ENCODE measurements at regions of chr11 and their contacts with region 1.

Region 1: DNA sequence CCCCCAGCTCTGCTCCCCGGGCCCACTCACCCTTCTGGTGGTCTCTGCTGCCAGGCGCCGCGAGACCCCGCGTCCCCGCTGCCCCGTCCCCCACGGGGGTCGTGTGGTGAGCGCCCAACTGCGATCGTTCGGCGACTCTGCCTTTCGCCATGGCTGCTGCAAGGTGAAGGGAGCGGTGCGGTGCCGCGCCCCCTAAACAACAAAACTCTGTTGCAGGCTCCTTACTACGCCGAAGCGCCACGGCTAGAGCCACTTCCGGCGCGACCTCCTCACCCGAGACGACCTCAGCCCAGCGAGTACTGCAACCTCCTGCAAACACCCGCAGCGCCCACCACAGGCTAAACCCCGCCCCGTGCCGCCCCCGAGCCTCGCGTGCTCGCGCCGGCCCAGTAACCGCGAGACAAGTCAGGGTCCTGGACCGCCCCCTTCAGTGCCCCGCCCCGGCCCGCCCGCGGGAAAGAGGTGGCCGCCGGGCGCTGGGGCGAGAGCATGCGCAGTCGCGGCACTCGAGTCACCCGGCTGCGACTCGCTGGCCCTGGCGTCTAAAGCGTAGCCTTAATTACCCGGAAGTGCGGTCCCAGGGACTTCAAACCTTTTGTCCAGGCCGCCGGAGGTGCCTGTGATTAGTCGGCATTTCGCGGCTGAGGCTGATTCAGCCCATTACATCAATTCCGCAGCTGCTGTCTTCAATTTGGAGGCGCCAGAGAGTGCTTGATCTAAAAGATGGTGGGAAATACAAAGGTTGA is at the start of gene TMEM41B:
- DNase-seq: peak; percentile 89
- ATAC-seq: peak; percentile 98
- H3K4me3 ChIP-seq: peak within 1 kb of the TSS; percentile 94
- H3K27ac ChIP-seq: peak within 1 kb of the TSS; percentile 83
- H3K4me1 ChIP-seq: peaks cover 3% of the 10 kb centered on the region; the same call in 1 of the 2 replicates
- H3K27me3 ChIP-seq: no peaks in the 10 kb centered on the region
- CTCF ChIP-seq: no peak
- EP300 ChIP-seq: peak in 1 of 2 experiments; percentile 42; a peak in 1 of 4 replicates
- POLR2A ChIP-seq: peak; percentile 96
- RAD21 ChIP-seq: 0 out of 2 replicates have a peak, but pooled peaks have one; percentile 2
- polyA plus RNA-seq, gene TMEM41B: 8.0 to 11.0 TPM

Region 2: DNA sequence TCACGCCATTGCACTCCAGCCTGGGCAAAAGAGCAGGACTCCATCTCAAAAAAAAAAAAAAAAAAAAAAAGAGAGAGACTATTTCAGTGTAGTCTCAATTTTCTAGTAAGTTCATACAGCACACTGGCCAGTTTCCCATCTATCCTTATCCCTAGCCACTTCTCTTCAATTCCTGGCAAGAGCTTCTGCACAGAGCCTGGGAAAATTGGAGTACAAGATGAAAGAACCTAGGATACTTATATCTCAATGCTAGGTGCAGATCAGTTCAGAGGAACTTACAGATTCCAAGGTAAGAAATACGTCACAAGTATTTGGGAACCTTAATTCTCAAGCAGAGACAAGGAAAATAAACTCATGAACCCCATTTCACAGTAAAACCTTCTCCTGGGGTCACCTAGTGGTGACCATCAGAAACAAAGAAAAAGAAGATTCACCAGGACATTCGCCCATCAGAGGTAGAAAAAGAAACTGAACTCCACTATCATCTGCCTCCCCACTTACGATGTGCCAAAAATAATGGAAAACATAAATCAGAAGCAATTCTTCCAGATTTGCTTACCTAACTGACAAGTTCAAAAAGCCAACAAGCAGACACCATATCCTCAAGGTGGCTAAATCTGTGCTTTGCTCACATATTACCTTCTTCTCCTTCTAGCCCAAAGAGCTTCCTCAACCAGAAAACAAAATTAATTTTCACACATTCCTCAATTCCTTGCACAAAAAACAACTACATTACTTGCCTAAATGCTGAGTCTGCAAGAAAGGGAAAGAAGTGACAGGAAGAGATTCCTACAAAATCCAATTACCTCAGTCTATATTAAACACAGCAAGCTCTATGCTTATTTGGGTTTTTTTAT is 54.3 kb before region 1 on chr11:
- CTCF ChIA-PET with region 1: interaction called, 3 read pairs
- POLR2A ChIA-PET with region 1: interaction called, 5 read pairs
- RAD21 ChIA-PET with region 1: interaction called, 7 read pairs
- SMC1A ChIA-PET with region 1: interaction called, 17 read pairs
- in situ Hi-C with region 1: no loop called
- intact Hi-C with region 1: loop called (anchors 2 kb)
- DNase-seq: no peak
- ATAC-seq: 0 out of 3 replicates have a peak, but pooled peaks have one; percentile 8
- H3K4me3 ChIP-seq: peak overlapping the region; percentile 50
- H3K27ac ChIP-seq: no peak overlapping the region
- H3K4me1 ChIP-seq: peaks cover 4% of the 10 kb centered on the region; the same call in 1 of the 2 replicates
- H3K27me3 ChIP-seq: no peaks in the 10 kb centered on the region
- CTCF ChIP-seq: peak; percentile 23 to 30 (median 24); a peak in 4 of 6 replicates
- EP300 ChIP-seq: no peak
- POLR2A ChIP-seq: no peak
- RAD21 ChIP-seq: peak; percentile 59

Region 3: GRCh38 chr11:9280655-9281301 is 33.7 kb before region 1 on chr11:
- CTCF ChIA-PET with region 1: interaction called, 3 read pairs
- POLR2A ChIA-PET with region 1: interaction called, 8 read pairs
- RAD21 ChIA-PET with region 1: interaction called, 9 read pairs
- SMC1A ChIA-PET with region 1: interaction called, 25 read pairs
- in situ Hi-C with region 1: no loop called
- intact Hi-C with region 1: no loop called
- DNase-seq: peak; percentile 58
- ATAC-seq: peak; percentile 97
- H3K4me3 ChIP-seq: no peak overlapping the region
- H3K27ac ChIP-seq: peak overlapping the region; percentile 44
- H3K4me1 ChIP-seq: peaks cover 11% of the 10 kb centered on the region
- H3K27me3 ChIP-seq: no peaks in the 10 kb centered on the region
- CTCF ChIP-seq: no peak
- EP300 ChIP-seq: no peak
- POLR2A ChIP-seq: no peak
- RAD21 ChIP-seq: no peak

Region 4: DNA sequence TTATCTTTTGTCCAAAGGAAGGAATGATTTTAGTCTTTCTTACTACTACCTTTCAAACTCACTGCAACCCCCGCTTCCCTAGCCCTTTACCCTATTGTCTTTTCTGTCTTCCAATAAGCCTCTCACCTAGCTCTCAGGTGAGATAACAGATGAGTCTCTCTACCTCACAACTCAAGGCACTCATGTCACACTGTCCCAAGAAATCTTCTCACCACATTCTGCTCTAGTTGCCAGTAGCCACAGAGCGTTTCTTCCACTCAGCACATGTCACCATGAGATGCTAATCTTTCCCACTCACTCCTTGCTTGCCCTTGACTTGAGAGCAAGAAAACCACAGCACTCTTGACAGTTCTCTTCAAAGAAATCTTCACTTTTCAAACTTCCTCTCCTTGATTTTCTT is 32.6 kb after region 1 on chr11:
- CTCF ChIA-PET with region 1: no interaction called
- POLR2A ChIA-PET with region 1: no interaction called
- RAD21 ChIA-PET with region 1: no interaction called
- SMC1A ChIA-PET with region 1: no interaction called
- in situ Hi-C with region 1: no loop called
- intact Hi-C with region 1: no loop called
- DNase-seq: no peak
- ATAC-seq: no peak
- H3K4me3 ChIP-seq: no peak overlapping the region
- H3K27ac ChIP-seq: no peak overlapping the region
- H3K4me1 ChIP-seq: no peaks in the 10 kb centered on the region
- H3K27me3 ChIP-seq: no peaks in the 10 kb centered on the region; a peak in 1 of 4 replicates
- CTCF ChIP-seq: no peak
- EP300 ChIP-seq: no peak
- POLR2A ChIP-seq: no peak
- RAD21 ChIP-seq: no peak

Region 5: GRCh38 chr11:9363954-9364912 is 49.8 kb after region 1 on chr11:
- CTCF ChIA-PET with region 1: interaction called, 5 read pairs
- POLR2A ChIA-PET with region 1: interaction called, 7 read pairs
- RAD21 ChIA-PET with region 1: no interaction called
- SMC1A ChIA-PET with region 1: interaction called, 7 read pairs
- in situ Hi-C with region 1: no loop called
- intact Hi-C with region 1: loop called (anchors 2 kb)
- DNase-seq: peak; percentile 36
- ATAC-seq: peak; percentile 99
- H3K4me3 ChIP-seq: peak overlapping the region; percentile 88
- H3K27ac ChIP-seq: peak overlapping the region; percentile 90
- H3K4me1 ChIP-seq: no peaks in the 10 kb centered on the region
- H3K27me3 ChIP-seq: no peaks in the 10 kb centered on the region
- CTCF ChIP-seq: no peak
- EP300 ChIP-seq: 0 out of 4 replicates have a peak, but pooled peaks have one; percentile 35 to 42
- POLR2A ChIP-seq: peak; percentile 98
- RAD21 ChIP-seq: no peak

Region 6: DNA sequence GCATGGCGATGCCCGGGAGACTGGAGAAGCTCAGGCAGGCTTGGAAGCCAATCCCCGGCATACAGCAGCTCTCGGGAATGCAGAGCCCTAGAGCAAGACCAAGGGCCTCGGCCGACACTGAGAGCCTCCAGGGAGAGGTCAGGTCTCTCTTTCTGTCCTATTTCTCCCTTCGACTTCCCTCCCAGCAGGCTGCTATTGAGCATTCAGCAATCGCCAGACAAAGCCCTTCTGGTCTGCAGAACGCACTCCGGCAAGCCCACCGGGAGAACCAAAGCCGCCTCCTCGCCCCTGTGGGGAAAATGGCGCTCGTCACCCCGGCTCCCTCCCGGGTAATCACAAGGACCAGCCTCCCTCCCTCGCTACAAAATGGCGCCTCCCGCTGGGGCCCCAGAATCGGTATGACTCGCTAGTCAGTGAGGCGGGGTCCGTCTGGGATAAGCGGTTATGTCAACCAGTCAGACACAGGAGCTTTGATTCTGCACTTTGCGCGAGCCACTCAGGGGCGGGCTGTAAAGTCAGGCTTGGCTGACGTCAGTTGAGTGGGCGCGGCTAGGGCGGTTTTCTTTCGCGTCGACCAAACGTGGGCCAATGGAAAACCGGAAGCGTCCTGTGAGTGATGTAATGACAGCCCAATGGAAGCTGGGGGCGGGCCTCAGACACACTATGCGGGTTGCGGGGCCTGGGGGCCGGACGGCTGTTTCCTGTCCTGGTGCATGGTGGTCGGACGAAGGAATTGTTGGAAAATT is 146.0 kb after region 1 on chr11 and contains the start of gene ZNF143:
- CTCF ChIA-PET with region 1: interaction called, 3 read pairs
- POLR2A ChIA-PET with region 1: interaction called, 4 read pairs
- RAD21 ChIA-PET with region 1: interaction called, 8 read pairs
- SMC1A ChIA-PET with region 1: interaction called, 11 read pairs
- in situ Hi-C with region 1: no loop called
- intact Hi-C with region 1: no loop called
- DNase-seq: peak; percentile 99
- ATAC-seq: peak; percentile 88
- H3K4me3 ChIP-seq: peak within 1 kb of the TSS; percentile 98
- H3K27ac ChIP-seq: peak within 1 kb of the TSS; percentile 100
- H3K4me1 ChIP-seq: peaks cover 7% of the 10 kb centered on the region
- H3K27me3 ChIP-seq: no peaks in the 10 kb centered on the region
- CTCF ChIP-seq: no peak
- EP300 ChIP-seq: peak in 1 of 2 experiments; percentile 9; a peak in 1 of 4 replicates
- POLR2A ChIP-seq: peak; percentile 90
- RAD21 ChIP-seq: no peak
- polyA plus RNA-seq, gene ZNF143: 16.1 to 18.3 TPM